ENCODE measurements at regions of chrX and their contacts with region 1.

Region 1: DNA sequence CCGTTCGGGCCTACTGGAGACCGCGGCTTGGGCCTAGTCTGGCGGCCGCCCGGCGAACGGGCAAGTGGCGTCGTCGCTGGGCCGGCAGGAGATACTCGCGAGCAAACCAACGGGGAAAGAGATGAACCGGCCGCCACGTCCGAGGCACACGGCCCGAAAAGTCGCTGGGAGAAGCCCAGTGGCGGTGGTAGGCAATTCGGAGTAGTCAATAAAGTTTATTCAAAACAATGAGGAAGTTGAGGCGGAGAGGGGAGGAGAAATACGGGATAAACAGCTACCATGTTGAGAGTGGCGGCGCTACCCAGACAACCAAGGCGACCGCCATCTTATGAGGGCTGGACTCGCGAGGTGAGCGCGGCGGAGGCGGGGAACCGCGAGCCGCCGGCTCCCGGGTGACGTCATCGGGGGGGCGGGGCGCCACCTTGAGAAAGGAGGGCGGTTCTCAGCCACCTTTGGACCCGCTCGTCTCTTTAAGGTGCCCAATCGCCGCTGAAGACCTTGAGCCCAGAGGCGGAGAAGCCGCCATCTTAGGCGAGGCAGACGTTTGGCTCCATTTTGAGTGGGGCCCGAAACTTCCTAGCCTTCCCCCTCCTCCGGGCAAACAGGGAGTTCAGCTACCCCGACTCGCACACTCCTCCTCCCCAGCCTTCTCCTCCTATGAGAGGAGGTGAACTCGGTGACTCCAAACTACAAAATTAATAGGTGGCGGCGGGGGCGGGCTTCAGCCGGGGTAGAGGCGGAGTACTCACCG is at the start of gene PHF8:
- DNase-seq: peak; percentile 87 to 96 (median 95)
- ATAC-seq: peak; percentile 82
- H3K4me3 ChIP-seq: peak within 1 kb of the TSS; percentile 75 to 86
- H3K4me3 Mint-ChIP-seq: peak within 1 kb of the TSS; percentile 94
- H3K27ac ChIP-seq: peak within 1 kb of the TSS; percentile 85 to 95
- H3K27ac Mint-ChIP-seq: peak within 1 kb of the TSS; percentile 97
- H3K4me1 ChIP-seq: peaks cover 11% of the 10 kb centered on the region
- H3K4me1 Mint-ChIP-seq: peaks cover 29% of the 10 kb centered on the region
- H3K27me3 ChIP-seq: no peaks in the 10 kb centered on the region
- H3K27me3 Mint-ChIP-seq: no peaks in the 10 kb centered on the region
- CTCF ChIP-seq: no peak
- total RNA-seq, gene PHF8: 41.8 to 43.7 TPM

Region 2: DNA sequence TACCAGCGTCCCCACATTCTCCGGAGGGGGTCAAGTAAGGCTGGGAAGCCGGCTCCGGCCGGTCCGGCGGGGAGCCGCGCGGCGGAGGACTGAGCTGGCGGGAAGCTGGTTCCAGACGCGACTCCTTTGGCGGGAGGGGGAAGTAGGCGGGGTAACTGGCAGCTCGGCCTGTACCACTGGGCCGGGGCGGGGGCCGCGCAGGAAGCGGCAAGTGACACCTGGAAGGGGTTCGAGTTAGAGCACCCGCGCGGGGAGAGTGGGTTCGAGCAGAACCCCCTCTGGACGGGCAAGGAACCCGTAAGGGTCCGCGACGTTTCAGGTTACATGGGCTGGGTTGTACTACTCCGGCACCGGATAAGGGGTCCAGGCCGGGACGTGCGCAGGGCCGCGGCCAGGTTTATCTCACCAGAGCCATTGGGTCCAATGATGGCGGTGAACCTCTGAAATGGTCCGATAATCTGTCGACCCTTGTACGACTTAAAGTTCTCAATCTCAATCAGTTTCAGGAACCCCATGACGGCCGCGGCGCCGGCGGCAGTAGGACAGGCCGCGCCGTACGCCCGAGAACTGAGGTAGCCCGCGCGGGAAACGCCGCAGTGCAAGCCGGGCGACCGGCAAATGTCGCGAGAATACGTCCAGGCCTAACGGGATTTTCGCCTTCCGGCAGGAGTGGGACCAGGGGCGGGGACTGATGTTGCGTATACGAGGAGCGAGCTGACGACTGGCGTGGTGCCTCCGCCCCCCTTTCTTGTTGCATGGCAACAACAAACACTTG is 622.0 kb before region 1 on chrX and contains the start of gene SMC1A:
- CTCF ChIA-PET with region 1: no interaction called
- POLR2A ChIA-PET with region 1: no interaction called
- intact Hi-C with region 1: loop called in 1 of 2 experiments (anchors 5 kb)
- DNase-seq: peak; percentile 86 to 98 (median 96)
- ATAC-seq: peak; percentile 89
- H3K4me3 ChIP-seq: peak within 1 kb of the TSS; percentile 92 to 94
- H3K4me3 Mint-ChIP-seq: peak within 1 kb of the TSS; percentile 94
- H3K27ac ChIP-seq: peak within 1 kb of the TSS; percentile 95 to 99
- H3K27ac Mint-ChIP-seq: peak within 1 kb of the TSS; percentile 95
- H3K4me1 ChIP-seq: peaks cover 18% of the 10 kb centered on the region
- H3K4me1 Mint-ChIP-seq: peaks cover 33% of the 10 kb centered on the region
- H3K27me3 ChIP-seq: no peaks in the 10 kb centered on the region
- H3K27me3 Mint-ChIP-seq: no peaks in the 10 kb centered on the region
- CTCF ChIP-seq: no peak
- total RNA-seq, gene SMC1A: 23.7 to 25.3 TPM

Region 3: GRCh38 chrX:53939127-53939526 is 105.2 kb before region 1 on chrX:
- CTCF ChIA-PET with region 1: no interaction called
- POLR2A ChIA-PET with region 1: no interaction called
- intact Hi-C with region 1: no loop called
- DNase-seq: peak in 1 of 9 experiments; percentile 1
- ATAC-seq: no peak
- H3K4me3 ChIP-seq: no peak overlapping the region
- H3K4me3 Mint-ChIP-seq: no peak overlapping the region
- H3K27ac ChIP-seq: no peak overlapping the region
- H3K27ac Mint-ChIP-seq: peak overlapping the region; percentile 20
- H3K4me1 ChIP-seq: no peaks in the 10 kb centered on the region
- H3K4me1 Mint-ChIP-seq: peaks cover 21% of the 10 kb centered on the region
- H3K27me3 ChIP-seq: no peaks in the 10 kb centered on the region
- H3K27me3 Mint-ChIP-seq: no peaks in the 10 kb centered on the region
- CTCF ChIP-seq: no peak

Region 4: DNA sequence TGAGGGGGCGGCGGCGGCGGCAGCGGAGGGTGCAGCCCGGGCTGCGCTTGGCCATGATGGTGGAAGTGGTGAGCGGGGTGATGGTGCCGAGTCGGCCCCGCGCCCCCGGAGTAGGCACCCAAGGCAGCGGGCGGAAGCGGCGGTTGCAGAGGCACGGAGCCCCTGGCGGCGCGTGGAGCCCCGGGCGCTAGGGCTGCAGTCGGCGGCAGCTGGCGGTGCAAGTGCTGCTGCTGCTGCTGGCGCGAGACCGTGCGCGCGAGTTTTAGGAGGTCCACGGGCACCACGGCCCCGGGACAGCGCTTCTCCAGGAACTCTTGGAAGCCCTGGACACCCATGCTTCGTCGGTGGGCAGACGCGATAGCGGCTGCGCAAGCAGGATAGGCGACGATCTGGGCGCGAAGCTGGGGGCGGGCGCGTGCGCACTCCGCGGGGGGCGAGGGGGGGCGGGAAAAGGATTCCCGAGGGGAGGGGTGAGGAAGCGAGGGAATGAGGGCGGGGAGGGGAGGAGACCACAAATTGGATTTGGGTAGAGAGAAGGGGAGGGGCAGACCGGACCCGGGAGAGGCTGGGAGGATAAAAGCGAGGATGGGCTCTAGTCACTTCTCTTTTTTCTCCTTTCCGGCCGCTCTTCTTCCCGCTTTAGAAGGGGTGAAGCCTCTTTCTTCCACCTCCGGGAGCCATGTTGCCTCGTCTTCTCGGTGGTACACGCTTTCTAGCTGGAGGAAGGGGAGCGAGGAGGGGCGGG is 138.7 kb after region 1 on chrX and contains the start of gene FAM120C:
- CTCF ChIA-PET with region 1: interaction called, 3 read pairs
- POLR2A ChIA-PET with region 1: interaction called, 21 read pairs
- intact Hi-C with region 1: loop called in 1 of 2 experiments (anchors 1 kb)
- DNase-seq: peak; percentile 26 to 83 (median 59)
- ATAC-seq: peak; percentile 70
- H3K4me3 ChIP-seq: peak within 1 kb of the TSS; percentile 60 to 72
- H3K4me3 Mint-ChIP-seq: peak within 1 kb of the TSS; percentile 78
- H3K27ac ChIP-seq: peak within 1 kb of the TSS; percentile 75 to 83
- H3K27ac Mint-ChIP-seq: peak within 1 kb of the TSS; percentile 88
- H3K4me1 ChIP-seq: peaks cover 38% of the 10 kb centered on the region
- H3K4me1 Mint-ChIP-seq: peaks cover 43% of the 10 kb centered on the region
- H3K27me3 ChIP-seq: no peaks in the 10 kb centered on the region
- H3K27me3 Mint-ChIP-seq: no peaks in the 10 kb centered on the region
- CTCF ChIP-seq: no peak
- total RNA-seq, gene FAM120C: 10.9 to 11.1 TPM

Region 5: DNA sequence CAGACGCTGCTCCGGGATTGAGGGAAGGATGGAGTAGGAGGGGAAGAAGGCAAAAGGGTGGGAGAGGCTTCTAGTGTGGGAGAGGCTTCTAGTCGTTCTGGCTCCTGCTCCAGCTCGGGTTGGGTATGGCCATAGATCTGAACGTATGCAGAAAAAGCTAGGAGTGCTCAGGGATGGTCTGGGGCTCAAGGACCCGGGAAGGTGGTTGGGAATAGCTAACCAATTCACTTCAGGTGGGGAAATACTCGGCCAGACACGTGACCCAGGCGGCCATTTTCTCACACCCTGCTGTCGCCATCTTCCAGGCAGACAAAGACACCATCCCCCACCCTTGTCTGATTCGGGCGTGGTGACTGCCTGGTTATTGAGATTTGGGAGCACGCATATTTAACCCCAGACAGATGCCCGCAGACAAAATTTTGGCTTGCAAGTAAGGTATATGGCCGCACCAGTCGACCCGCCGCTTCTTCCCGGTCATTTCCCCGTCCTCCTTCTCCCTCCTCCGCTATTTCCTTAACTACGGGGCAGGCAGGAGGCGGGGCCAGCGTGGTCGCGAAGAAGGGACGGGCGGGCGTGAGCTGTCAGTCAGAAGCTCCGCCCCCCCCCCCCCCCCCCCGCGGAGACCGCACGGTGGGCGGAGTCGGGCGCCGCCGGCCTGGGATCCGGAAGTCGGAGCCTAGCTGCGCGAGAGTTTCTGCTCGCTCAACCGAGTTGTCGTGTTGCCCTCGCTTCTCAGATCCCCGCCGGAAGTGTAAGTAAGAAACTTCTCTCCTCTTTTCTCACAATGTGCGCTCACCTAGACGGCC is 485.5 kb after region 1 on chrX and contains the start of gene GNL3L:
- CTCF ChIA-PET with region 1: no interaction called
- POLR2A ChIA-PET with region 1: interaction called, 5 read pairs
- intact Hi-C with region 1: loop called in 1 of 2 experiments (anchors 5 kb)
- DNase-seq: peak; percentile 55 to 89 (median 78)
- ATAC-seq: peak; percentile 83
- H3K4me3 ChIP-seq: peak within 1 kb of the TSS; percentile 85 to 95
- H3K4me3 Mint-ChIP-seq: peak within 1 kb of the TSS; percentile 97
- H3K27ac ChIP-seq: peak within 1 kb of the TSS; percentile 79 to 94
- H3K27ac Mint-ChIP-seq: peak within 1 kb of the TSS; percentile 97
- H3K4me1 ChIP-seq: peaks cover 22% of the 10 kb centered on the region
- H3K4me1 Mint-ChIP-seq: peaks cover 40% of the 10 kb centered on the region
- H3K27me3 ChIP-seq: no peaks in the 10 kb centered on the region
- H3K27me3 Mint-ChIP-seq: no peaks in the 10 kb centered on the region
- CTCF ChIP-seq: no peak
- total RNA-seq, gene GNL3L: 20.9 to 24.0 TPM

Region 6: GRCh38 chrX:55057675-55058249 is 1013.5 kb after region 1 on chrX:
- CTCF ChIA-PET with region 1: interaction called, 3 read pairs
- POLR2A ChIA-PET with region 1: no interaction called
- intact Hi-C with region 1: loop called (anchors 2 to 5 kb)
- DNase-seq: peak in 5 of 9 experiments; percentile 1 to 64 (median 33)
- ATAC-seq: peak; percentile 75
- H3K4me3 ChIP-seq: peak overlapping the region in 1 of 2 experiments; percentile 20
- H3K4me3 Mint-ChIP-seq: peak overlapping the region; percentile 71
- H3K27ac ChIP-seq: no peak overlapping the region
- H3K27ac Mint-ChIP-seq: peak overlapping the region; percentile 77
- H3K4me1 ChIP-seq: peaks cover 12% of the 10 kb centered on the region
- H3K4me1 Mint-ChIP-seq: peaks cover 15% of the 10 kb centered on the region
- H3K27me3 ChIP-seq: no peaks in the 10 kb centered on the region
- H3K27me3 Mint-ChIP-seq: no peaks in the 10 kb centered on the region
- CTCF ChIP-seq: peak; percentile 87

Measured in CD8-positive, alpha-beta T cell (primary cell).